A549 (cell line): ENCODE measurements at regions of chr7 and their contacts with region 1.

Region 1: DNA sequence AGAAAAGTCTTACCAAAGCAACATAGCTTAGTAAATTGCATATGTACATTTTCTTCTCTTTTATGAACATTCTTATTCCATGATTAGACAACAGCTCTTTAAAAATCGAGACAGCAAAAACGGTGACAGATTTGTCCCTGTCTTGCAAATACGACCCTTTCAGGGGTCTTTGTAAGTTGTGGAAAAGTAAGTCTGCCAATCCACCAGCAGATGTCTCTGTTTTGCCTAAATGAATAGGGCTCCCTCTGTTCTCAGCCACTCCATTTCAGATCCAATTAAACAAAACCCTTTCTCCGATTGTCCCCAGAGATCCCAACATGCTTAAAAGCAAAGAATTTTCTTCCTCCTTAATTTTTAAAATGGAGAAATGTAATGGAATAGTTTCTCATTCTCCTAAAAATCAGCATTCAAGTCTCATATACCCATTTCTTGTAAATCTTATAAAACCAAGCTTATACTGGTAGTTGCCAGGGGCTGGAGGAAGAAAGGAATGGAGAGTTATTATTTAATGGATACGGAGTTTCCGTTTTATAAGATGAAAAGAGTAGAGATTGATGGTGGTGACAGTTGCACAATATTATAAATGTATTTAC is 61.0 kb upstream of the NFE2L3 start:
- DNase-seq: peak; percentile 45 to 64
- ATAC-seq: peak; percentile 68 to 87; a peak in 5 of 6 replicates
- H3K4me3 ChIP-seq: no peak overlapping the region
- H3K27ac ChIP-seq: no peak overlapping the region
- H3K4me1 ChIP-seq: no peaks in the 10 kb centered on the region
- CTCF ChIP-seq: peak; percentile 87
- EP300 ChIP-seq: no peak
- POLR2A ChIP-seq: no peak
- RAD21 ChIP-seq: peak; percentile 78 to 80

Region 2: GRCh38 chr7:26101361-26102151 is 10.5 kb after region 1 on chr7:
- CTCF ChIA-PET with region 1: interaction called, 28 read pairs
- POLR2A ChIA-PET with region 1: no interaction called
- DNase-seq: no peak
- ATAC-seq: no peak
- H3K4me3 ChIP-seq: no peak overlapping the region
- H3K27ac ChIP-seq: no peak overlapping the region
- H3K4me1 ChIP-seq: peaks cover 10% of the 10 kb centered on the region; the same call in 2 of the 3 replicates
- CTCF ChIP-seq: no peak
- EP300 ChIP-seq: no peak
- POLR2A ChIP-seq: no peak
- RAD21 ChIP-seq: no peak

Region 3: GRCh38 chr7:26151953-26152781 is 61.1 kb after region 1 on chr7 and contains the start of gene NFE2L3:
- CTCF ChIA-PET with region 1: interaction called, 11 read pairs
- POLR2A ChIA-PET with region 1: interaction called, 5 read pairs
- DNase-seq: peak; percentile 64 to 80
- ATAC-seq: peak; percentile 82 to 89
- H3K4me3 ChIP-seq: peak within 1 kb of the TSS; percentile 91
- H3K27ac ChIP-seq: peak within 1 kb of the TSS; percentile 78 to 94
- H3K4me1 ChIP-seq: peaks cover 28% of the 10 kb centered on the region; the same call in 2 of the 3 replicates
- CTCF ChIP-seq: no peak
- EP300 ChIP-seq: no peak
- POLR2A ChIP-seq: peak; percentile 63
- RAD21 ChIP-seq: no peak
- polyA plus RNA-seq, gene NFE2L3: 9.6 and 11.4 TPM in 2 replicates

Region 4: DNA sequence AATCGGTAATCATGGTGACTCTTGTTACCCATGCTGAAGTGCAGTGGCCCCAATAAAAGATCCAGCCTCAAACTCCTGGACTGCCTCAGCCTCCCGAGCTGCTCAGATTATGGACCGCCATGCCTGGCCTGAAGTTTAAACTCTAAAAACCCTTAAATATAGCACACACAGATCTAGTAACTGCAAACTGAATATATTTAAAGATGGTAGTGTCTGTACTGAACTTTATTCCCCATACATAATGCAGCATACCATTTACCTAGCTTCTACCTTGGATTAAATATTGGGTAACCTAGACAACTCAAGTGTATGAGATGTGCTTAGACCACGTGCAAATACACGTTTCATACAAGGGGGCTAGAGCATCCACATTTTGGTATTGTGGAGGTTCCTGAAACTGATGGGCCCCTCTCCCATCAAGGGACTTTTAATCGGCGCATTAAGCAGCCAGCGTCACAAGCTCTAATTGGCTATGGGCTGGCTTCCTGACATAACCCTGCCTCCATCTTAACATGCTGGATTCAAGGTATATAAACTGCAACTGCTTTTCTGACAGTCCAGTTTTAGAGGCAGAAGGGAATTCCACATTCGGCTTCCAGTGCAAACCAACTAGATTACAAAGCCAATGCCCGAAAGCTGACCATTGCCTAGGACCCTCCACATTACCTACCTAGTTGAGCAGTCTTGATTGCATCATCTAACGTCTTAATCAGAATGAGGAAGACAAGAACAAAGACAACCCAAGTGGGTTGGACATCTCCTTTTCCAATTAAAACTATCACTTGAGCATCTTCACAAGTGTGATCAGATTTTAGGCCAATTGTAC is 96.6 kb after region 1 on chr7:
- CTCF ChIA-PET with region 1: interaction called, 46 read pairs
- POLR2A ChIA-PET with region 1: interaction called, 6 read pairs
- DNase-seq: no peak
- ATAC-seq: peak; percentile 14 to 26; a peak in 4 of 6 replicates
- H3K4me3 ChIP-seq: no peak overlapping the region
- H3K27ac ChIP-seq: peak overlapping the region in 1 of 2 experiments; percentile 57; a peak in 2 of 6 replicates
- H3K4me1 ChIP-seq: peaks cover 95% of the 10 kb centered on the region
- CTCF ChIP-seq: no peak
- EP300 ChIP-seq: no peak
- POLR2A ChIP-seq: no peak
- RAD21 ChIP-seq: no peak

Region 5: GRCh38 chr7:26200444-26201246 is 109.6 kb after region 1 on chr7 and contains the start of gene HNRNPA2B1:
- CTCF ChIA-PET with region 1: interaction called, 42 read pairs
- POLR2A ChIA-PET with region 1: interaction called, 5 read pairs
- DNase-seq: peak; percentile 71 to 97
- ATAC-seq: peak; percentile 68 to 78
- H3K4me3 ChIP-seq: peak within 1 kb of the TSS; percentile 92
- H3K27ac ChIP-seq: peak within 1 kb of the TSS; percentile 99
- H3K4me1 ChIP-seq: peaks cover 37% of the 10 kb centered on the region
- CTCF ChIP-seq: no peak
- EP300 ChIP-seq: no peak
- POLR2A ChIP-seq: peak; percentile 99
- RAD21 ChIP-seq: no peak
- polyA plus RNA-seq, gene HNRNPA2B1: 595 and 1,070 TPM in 2 replicates